Posterior cingulate gyrus (tissue), 11 donors: ENCODE measurements at regions of chr15 and their contacts with region 1.

Region 1: DNA sequence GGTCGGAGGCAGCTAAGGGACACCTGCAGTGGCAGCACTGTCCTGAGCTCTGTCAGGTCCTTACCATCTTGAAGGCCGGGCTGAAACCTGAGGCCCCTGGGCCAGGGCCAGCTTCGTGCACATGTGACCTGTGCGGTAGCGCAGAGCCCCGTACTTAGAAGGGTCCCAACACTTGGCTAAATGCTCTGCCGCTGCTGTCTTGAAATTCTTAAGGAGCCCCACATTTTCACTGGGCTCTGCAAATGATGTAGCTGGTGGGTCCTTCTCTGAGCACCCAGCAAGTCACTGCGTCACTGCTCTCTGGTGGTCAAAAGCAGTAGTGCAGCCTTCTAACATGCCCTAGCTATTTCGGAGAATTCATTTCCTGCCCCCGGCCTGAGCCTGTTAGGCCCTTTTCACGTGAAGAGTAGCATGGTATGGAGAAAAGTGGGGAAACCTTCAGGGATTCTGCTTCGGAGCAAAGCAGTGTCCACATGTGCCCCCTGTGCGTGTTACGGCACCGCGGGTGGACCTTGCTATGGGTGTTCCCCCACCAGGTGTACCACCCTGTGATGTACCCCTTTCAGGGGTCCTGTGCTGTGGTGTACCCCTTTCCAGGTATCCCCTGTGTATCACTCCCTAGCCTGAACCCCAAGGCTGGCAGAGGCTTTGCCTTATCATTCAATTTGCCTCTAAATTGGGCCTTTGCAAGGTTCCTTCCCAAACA is 79.7 kb downstream of the TMEM266 start:
- DNase-seq: peak in 8 of 10 donors; percentile 28 to 91 (median 70)

Region 2: DNA sequence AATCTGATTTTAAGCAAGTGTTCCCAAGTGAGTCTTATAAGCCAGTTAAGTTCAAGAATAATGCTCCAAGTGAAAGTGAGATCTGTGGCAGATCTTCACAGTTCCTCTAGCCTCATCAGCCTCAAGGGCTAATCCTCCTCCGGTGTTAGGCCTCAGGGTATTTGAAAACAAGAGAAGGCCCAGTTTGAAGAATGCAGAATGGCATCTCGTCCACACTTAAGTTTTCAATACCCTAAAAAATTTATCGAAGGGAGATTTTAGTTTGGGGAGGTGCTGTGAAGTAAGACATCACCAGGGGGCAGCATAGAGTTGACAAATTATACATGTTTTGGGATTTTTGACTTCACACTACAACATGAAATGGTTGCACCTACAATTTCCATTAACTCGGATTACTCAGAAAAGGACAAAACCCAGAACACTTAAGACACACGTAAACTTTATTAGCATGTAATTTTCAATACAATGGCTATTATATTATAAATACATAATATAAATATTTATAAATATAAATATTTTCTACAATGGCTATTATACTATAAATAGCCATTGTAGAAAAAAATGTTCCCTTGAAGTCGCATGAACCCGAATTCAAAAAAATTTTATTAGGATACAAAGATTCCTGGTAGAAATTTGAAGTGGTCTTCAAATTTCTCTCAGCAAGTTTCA is 82.1 kb before region 1 on chr15:
- intact Hi-C with region 1: loop called (anchors 2 kb)
- DNase-seq: peak in 2 of 10 donors; percentile 14 to 15